Right cardiac atrium (tissue), 5 donors: ENCODE measurements at regions of chr5 and their contacts with region 1.

Region 1: GRCh38 chr5:139787568-139788293 is 7.9 kb upstream of the PSD2 start:
- DNase-seq: peak; percentile 83 to 96 (median 95)
- ATAC-seq: peak; percentile 89
- H3K4me3 ChIP-seq: peak overlapping the region; percentile 50
- H3K27ac ChIP-seq: peak overlapping the region; percentile 13
- H3K4me1 ChIP-seq: no peaks in the 10 kb centered on the region
- H3K27me3 ChIP-seq: no peaks in the 10 kb centered on the region

Region 2: GRCh38 chr5:139403787-139404483 is 383.8 kb before region 1 on chr5 and contains the start of gene SPATA24:
- intact Hi-C with region 1: no loop called
- DNase-seq: peak; percentile 98 to 100 (median 99)
- ATAC-seq: peak; percentile 96
- H3K4me3 ChIP-seq: peak within 1 kb of the TSS; percentile 41
- H3K27ac ChIP-seq: peak within 1 kb of the TSS; percentile 92
- H3K4me1 ChIP-seq: no peaks in the 10 kb centered on the region
- H3K27me3 ChIP-seq: no peaks in the 10 kb centered on the region
- total RNA-seq, gene SPATA24: 9.8 to 25.4 (median 14.4) TPM

Region 3: DNA sequence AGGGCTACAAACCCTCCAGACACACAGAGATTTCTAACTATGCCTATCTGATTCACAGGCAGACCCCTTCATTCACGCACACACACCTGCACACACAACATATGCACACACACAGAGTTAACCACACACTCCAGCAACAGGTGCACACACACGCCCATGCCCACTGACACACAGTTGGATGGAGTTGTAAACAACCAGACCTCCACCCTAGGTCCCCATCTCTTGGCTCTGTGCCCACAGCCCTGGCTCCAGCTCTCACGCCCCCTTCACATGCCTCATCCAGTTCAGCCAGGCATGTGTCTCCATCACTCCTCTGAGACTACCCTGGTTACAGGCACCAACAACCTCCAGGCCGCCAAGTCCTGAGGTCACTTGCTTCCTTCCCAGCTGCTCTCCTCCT is 69.0 kb after region 1 on chr5:
- intact Hi-C with region 1: loop called in 3 of 4 experiments (anchors 5 kb)
- DNase-seq: no peak
- ATAC-seq: no peak
- H3K4me3 ChIP-seq: no peak overlapping the region
- H3K27ac ChIP-seq: no peak overlapping the region
- H3K4me1 ChIP-seq: no peaks in the 10 kb centered on the region
- H3K27me3 ChIP-seq: no peaks in the 10 kb centered on the region

Region 4: GRCh38 chr5:139863855-139864558 is 76.3 kb after region 1 on chr5:
- intact Hi-C with region 1: loop called (anchors 2 to 5 kb)
- DNase-seq: peak; percentile 62 to 88 (median 81)
- ATAC-seq: peak; percentile 69 to 74
- H3K4me3 ChIP-seq: no peak overlapping the region
- H3K27ac ChIP-seq: no peak overlapping the region
- H3K4me1 ChIP-seq: no peaks in the 10 kb centered on the region
- H3K27me3 ChIP-seq: no peaks in the 10 kb centered on the region

Region 5: GRCh38 chr5:139968547-139969261 is 181.0 kb after region 1 on chr5:
- intact Hi-C with region 1: loop called (anchors 2 kb)
- DNase-seq: peak; percentile 82 to 95 (median 94)
- ATAC-seq: peak; percentile 94 to 95
- H3K4me3 ChIP-seq: no peak overlapping the region
- H3K27ac ChIP-seq: no peak overlapping the region
- H3K4me1 ChIP-seq: peaks cover 3% of the 10 kb centered on the region
- H3K27me3 ChIP-seq: no peaks in the 10 kb centered on the region

Region 6: GRCh38 chr5:140157032-140157803 is 369.5 kb after region 1 on chr5:
- intact Hi-C with region 1: loop called in 2 of 4 experiments (anchors 5 to 10 kb)
- DNase-seq: peak; percentile 92 to 96 (median 95)
- ATAC-seq: peak; percentile 96
- H3K4me3 ChIP-seq: peak overlapping the region; percentile 22
- H3K27ac ChIP-seq: peak overlapping the region; percentile 25
- H3K4me1 ChIP-seq: no peaks in the 10 kb centered on the region
- H3K27me3 ChIP-seq: no peaks in the 10 kb centered on the region